ENCODE measurements at regions of chr1 and their contacts with region 1.

Region 1: DNA sequence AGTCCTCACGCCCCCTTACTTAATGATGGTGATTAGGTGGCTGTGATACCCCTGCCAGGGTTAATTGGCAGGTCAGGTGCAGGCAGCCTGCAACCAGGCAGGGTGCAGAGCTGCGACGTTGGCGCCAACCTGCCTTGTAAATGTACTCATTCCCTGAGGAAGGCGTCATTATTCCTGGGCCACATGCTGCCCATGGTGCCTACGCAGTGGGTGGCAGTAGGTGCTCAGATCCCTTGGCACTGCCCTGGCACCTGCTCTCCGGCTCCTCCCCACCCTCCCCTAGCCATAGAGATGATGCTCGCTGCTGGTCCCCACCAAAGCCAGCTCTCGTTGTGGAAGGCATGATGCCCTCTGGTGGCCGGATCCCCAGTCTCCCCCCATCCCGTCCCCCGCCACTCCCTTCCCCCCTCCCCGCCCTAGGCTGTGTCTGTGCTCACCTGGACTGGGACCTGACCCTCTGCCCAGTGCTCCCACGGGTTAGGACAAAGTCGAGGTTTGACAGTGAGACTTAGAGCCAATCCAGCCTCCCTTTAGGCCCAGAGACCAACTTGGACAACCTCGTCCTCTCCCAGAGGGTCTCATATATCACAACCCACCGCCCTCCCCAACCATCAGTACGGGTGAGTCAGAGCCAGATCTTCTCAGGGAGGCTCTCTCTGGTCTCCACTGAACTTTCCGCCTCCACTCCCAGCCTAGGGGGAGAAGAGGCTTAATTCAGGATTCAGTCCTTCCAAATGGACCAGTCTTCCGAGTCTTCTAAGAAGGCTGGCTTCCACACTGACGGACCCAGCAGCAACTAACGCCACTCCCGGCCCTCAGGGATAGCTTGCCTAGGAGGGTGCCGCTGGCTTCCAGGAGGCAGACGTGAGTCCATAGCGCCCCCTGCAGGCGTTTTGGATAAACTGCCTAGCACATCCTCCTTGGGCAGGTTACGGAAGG is 5.7 kb downstream of the KRTCAP2 start:
- DNase-seq: peak; percentile 80
- ATAC-seq: peak; percentile 82
- H3K4me3 Mint-ChIP-seq: peak overlapping the region; percentile 80
- H3K27ac Mint-ChIP-seq: peak overlapping the region; percentile 72
- H3K4me1 Mint-ChIP-seq: peaks cover 25% of the 10 kb centered on the region
- H3K27me3 Mint-ChIP-seq: no peaks in the 10 kb centered on the region
- CTCF ChIP-seq: no peak

Region 2: DNA sequence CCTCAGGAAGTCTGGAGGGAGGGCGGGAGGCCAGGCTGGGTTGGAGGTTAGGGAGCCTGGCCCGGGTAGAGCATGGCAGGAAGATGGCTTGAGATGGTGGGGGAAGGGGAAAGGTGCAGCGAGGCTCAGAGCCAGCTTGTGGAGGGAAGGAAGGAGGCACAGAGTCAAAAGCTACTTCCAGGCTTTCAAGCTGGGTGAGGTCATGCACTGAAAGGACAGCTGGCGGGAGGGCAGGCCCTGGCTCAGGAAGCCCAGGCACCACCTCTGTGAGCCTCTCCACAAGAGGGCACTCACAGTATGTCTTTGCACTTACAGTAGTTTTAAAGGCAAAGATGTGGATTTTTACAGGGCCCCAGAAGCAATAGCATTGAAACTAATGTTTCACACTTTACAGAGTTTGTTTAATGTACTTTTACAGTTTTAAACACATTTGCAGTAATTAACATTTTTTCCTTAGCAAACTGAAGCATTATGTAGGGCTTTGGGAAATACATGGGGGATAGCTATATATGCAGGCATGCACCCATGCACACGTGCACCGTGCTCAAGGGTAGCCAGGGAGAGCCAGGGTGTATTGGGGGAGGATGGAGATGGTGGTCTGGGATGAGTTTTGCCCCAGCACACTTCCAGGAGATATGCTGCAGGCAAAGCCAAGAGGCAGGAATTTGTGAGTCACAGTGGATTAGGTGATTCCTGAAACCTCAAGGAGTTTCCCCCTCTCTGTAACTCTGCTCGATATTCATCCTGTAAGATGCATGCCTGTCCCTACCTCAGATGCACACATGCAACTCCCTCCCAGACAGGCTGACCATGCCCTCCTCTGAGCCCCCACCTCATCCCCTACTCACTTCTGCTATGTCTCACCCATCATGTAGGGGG is 122.4 kb before region 1 on chr1:
- CTCF ChIA-PET with region 1: interaction called, 4 read pairs
- POLR2A ChIA-PET with region 1: no interaction called
- intact Hi-C with region 1: loop called (anchors 1 kb)
- DNase-seq: peak; percentile 22
- ATAC-seq: peak; percentile 96
- H3K4me3 Mint-ChIP-seq: no peak overlapping the region
- H3K27ac Mint-ChIP-seq: no peak overlapping the region
- H3K4me1 Mint-ChIP-seq: peaks cover 4% of the 10 kb centered on the region
- H3K27me3 Mint-ChIP-seq: no peaks in the 10 kb centered on the region
- CTCF ChIP-seq: peak; percentile 58

Region 3: GRCh38 chr1:155091071-155091709 is 76.2 kb before region 1 on chr1:
- CTCF ChIA-PET with region 1: interaction called, 145 read pairs
- POLR2A ChIA-PET with region 1: interaction called, 38 read pairs
- intact Hi-C with region 1: loop called (anchors 1 kb)
- DNase-seq: peak; percentile 76
- ATAC-seq: peak; percentile 89
- H3K4me3 Mint-ChIP-seq: no peak overlapping the region
- H3K27ac Mint-ChIP-seq: no peak overlapping the region
- H3K4me1 Mint-ChIP-seq: peaks cover 12% of the 10 kb centered on the region
- H3K27me3 Mint-ChIP-seq: peaks cover 6% of the 10 kb centered on the region
- CTCF ChIP-seq: peak; percentile 48

Region 4: DNA sequence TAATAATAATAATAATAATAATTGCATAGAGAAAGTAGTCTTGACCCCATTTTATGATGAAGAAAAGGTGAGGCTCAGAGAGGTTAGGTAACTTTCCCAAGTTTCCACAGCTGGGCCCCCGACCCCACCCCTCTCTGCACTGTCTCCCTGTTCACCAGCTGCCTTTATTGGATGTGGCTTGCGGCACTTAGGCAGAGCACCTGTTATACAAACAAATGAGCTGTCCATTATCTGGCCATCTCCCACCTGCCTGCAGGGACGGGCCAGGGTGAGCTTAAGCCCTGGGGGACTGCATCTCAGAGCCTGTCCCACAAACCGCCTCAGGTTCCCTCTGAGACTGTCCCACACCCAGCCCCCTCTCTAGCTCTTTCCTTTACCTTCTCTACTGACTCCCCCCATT is 49.8 kb before region 1 on chr1:
- CTCF ChIA-PET with region 1: interaction called, 4 read pairs
- POLR2A ChIA-PET with region 1: interaction called, 6 read pairs
- intact Hi-C with region 1: loop called (anchors 1 kb)
- DNase-seq: no peak
- ATAC-seq: no peak
- H3K4me3 Mint-ChIP-seq: no peak overlapping the region
- H3K27ac Mint-ChIP-seq: no peak overlapping the region
- H3K4me1 Mint-ChIP-seq: no peaks in the 10 kb centered on the region
- H3K27me3 Mint-ChIP-seq: peaks cover 15% of the 10 kb centered on the region
- CTCF ChIP-seq: no peak

Region 5: DNA sequence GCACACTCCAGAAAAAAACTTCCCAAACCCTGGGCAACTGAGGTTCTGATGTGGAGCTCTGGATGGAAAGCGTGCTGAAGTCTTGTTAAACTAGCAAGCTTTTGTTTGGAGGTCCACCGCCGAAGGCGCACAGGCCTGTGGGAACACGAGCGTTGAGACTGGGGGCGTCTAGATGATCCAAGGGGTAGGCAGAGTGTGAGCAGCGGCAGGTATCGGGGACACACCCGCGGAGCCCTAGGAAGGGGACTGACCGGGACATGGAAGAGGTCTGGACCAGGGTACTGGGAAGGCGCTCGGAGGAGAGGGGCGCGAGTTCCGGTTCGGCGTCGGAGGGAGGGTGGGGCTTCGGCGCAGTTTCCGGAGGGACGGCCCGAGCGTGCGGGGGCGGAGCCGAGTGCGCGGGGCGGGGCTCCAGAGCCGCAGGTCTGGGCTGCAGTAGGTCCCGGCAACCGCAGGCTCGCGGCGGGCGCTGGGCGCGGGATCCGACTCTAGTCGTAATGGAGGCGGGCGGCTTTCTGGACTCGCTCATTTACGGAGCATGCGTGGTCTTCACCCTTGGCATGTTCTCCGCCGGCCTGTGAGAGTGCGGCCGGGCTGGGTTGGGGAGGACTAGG is 31.9 kb before region 1 on chr1 and contains the start of gene SLC50A1:
- CTCF ChIA-PET with region 1: interaction called, 40 read pairs
- POLR2A ChIA-PET with region 1: interaction called, 92 read pairs
- intact Hi-C with region 1: loop called (anchors 1 kb)
- DNase-seq: peak; percentile 94
- ATAC-seq: peak; percentile 86
- H3K4me3 Mint-ChIP-seq: peak within 1 kb of the TSS; percentile 96
- H3K27ac Mint-ChIP-seq: peak within 1 kb of the TSS; percentile 99
- H3K4me1 Mint-ChIP-seq: peaks cover 46% of the 10 kb centered on the region
- H3K27me3 Mint-ChIP-seq: peaks cover 3% of the 10 kb centered on the region
- CTCF ChIP-seq: no peak
- total RNA-seq, gene SLC50A1: 77.3 and 85.2 TPM in 2 replicates

Region 6: GRCh38 chr1:155145491-155145890 is 21.9 kb before region 1 on chr1:
- CTCF ChIA-PET with region 1: interaction called, 18 read pairs
- POLR2A ChIA-PET with region 1: interaction called, 20 read pairs
- intact Hi-C with region 1: loop called (anchors 1 kb)
- DNase-seq: no peak
- ATAC-seq: no peak
- H3K4me3 Mint-ChIP-seq: no peak overlapping the region
- H3K27ac Mint-ChIP-seq: no peak overlapping the region
- H3K4me1 Mint-ChIP-seq: peaks cover 25% of the 10 kb centered on the region
- H3K27me3 Mint-ChIP-seq: no peaks in the 10 kb centered on the region
- CTCF ChIP-seq: no peak

Region 7: DNA sequence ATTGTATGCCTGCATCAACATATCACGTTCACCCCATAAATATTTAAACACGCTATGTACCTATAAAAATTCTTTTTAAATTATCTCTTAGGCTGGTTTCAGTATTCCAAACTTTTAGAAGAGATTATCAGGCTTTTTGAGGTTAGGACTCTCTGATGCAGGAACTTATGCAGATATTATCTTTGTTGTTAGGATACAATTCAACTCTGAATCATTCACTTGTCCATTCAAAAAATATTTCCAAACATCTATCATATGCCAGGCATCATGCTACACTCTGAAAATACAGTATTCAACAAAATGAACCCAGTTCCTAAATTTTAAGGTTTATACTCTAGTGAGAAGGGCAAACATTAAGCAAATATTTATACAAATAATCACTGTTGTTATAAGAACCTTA is 354.6 kb after region 1 on chr1:
- CTCF ChIA-PET with region 1: no interaction called
- POLR2A ChIA-PET with region 1: no interaction called
- intact Hi-C with region 1: no loop called
- DNase-seq: no peak
- ATAC-seq: no peak
- H3K4me3 Mint-ChIP-seq: no peak overlapping the region
- H3K27ac Mint-ChIP-seq: no peak overlapping the region
- H3K4me1 Mint-ChIP-seq: peaks cover 47% of the 10 kb centered on the region
- H3K27me3 Mint-ChIP-seq: no peaks in the 10 kb centered on the region
- CTCF ChIP-seq: no peak